Mammary epithelial cell (primary cell): ENCODE measurements at regions of chr12 and their contacts with region 1.

Region 1: DNA sequence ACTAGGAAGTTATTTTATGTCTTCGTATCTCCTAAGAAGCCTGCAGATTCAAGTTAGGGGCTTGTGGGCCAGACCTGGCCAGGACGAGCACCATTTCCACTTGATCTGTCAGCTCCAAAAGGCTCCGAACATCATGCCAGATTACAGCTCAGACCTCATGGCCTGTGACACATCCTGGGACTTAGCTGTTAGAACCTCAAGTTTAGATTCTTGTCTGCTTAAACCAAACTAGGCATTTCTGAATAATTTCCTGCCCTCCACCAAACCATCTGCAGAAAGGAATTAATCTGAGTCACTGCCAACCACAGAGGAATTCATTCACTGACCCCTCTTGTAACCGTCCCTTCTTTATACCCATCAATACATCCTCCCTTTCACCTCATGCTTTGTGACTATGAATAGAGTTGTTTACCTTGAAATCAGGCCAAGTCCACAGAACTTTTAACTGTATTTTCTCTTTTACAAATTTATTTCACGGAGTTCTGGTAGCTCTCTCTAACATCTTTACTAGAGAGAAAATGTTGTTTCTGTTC is 120.3 kb downstream of the FBXL14 start:
- DNase-seq: peak; percentile 93
- H3K4me3 ChIP-seq: peak overlapping the region in 2 of 3 experiments; percentile 17 to 28
- H3K27ac ChIP-seq: peak overlapping the region; percentile 92
- H3K4me1 ChIP-seq: peaks cover 29% of the 10 kb centered on the region
- H3K27me3 ChIP-seq: no peaks in the 10 kb centered on the region
- CTCF ChIP-seq: no peak

Region 2: DNA sequence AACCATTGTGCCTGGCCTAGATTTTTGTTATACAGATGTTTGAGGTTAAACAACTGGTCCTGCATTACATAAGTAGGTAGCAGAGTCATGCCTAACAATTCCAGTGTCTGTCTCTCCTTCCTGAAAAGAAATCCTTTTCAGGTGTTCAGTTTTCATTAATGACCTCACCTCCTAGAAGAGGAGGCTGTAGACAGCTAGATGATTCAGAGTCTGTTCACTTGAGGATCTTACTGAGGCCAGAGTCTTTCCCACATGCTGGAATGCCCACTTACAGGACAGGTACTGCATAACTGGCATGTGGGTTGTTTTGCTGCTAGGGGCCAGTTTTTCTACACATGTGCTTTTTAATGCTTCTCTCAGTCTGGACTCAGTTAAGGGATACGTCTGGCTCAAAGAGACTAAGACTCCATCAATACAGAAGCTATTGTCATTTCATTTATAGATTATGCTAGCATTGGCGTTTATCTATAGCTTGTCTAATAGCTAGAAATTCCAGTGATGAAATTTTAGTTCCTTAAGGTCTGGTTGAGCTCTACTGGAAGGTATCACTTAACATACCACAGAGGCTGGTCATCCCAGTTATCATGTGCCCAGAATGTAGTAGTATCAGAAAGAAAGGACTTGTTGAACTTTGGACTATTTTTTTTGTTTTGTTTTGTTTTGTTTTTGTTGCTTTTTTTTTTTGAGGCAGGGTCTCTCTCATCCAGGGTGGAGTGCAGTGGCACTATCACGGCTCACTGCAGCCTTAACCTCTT is 276.7 kb before region 1 on chr12:
- CTCF ChIA-PET with region 1: interaction called, 7 read pairs
- dilution Hi-C with region 1: no loop called
- in situ Hi-C with region 1: no loop called
- intact Hi-C with region 1: loop called (anchors 5 kb)
- DNase-seq: peak; percentile 96
- H3K4me3 ChIP-seq: no peak overlapping the region
- H3K27ac ChIP-seq: peak overlapping the region; percentile 82
- H3K4me1 ChIP-seq: peaks cover 27% of the 10 kb centered on the region
- H3K27me3 ChIP-seq: no peaks in the 10 kb centered on the region
- CTCF ChIP-seq: no peak

Region 3: GRCh38 chr12:1398673-1399072 is 75.4 kb before region 1 on chr12:
- CTCF ChIA-PET with region 1: no interaction called
- dilution Hi-C with region 1: no loop called
- in situ Hi-C with region 1: no loop called
- intact Hi-C with region 1: no loop called
- DNase-seq: no peak
- H3K4me3 ChIP-seq: no peak overlapping the region
- H3K27ac ChIP-seq: no peak overlapping the region
- H3K4me1 ChIP-seq: no peaks in the 10 kb centered on the region
- H3K27me3 ChIP-seq: no peaks in the 10 kb centered on the region
- CTCF ChIP-seq: peak in 1 of 2 donors; percentile 26

Region 4: DNA sequence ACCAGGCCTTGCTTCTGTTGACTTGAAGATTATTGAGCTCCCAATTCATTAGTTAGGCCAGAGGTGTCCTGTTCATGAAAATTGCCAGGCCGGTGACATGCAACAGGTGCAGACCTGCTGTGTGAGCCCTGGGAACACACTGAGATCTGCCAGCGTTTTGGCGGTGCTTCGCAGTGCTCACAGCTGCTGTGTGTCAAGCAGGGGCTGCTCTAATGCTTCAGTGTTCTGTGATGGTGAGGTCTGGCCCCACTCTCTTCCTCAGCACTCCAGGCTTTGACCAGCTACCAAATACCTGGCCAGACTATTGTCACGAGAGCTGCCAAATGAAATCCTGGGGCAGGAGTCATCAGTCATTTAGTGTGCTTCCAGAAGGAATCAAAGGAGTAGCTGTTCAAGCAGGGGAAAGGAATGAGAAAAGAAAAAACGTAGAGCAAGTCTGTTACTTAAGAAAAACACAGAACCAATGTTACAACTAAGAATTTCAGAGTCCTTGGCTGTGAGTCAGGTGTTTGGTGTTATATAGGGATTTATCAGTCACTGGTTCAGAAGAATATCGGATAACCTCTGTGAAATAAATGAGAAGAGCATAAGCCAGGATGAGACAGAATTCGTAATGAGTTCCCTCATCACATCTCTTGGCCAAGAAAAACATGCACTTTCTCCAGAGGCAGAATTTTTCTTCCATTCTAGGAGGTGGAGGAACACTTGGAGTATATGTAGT is 30.5 kb before region 1 on chr12:
- CTCF ChIA-PET with region 1: no interaction called
- dilution Hi-C with region 1: no loop called
- in situ Hi-C with region 1: no loop called
- intact Hi-C with region 1: loop called (anchors 1 kb)
- DNase-seq: peak; percentile 78
- H3K4me3 ChIP-seq: peak overlapping the region; percentile 16 to 31 (median 22)
- H3K27ac ChIP-seq: peak overlapping the region; percentile 55
- H3K4me1 ChIP-seq: peaks cover 23% of the 10 kb centered on the region
- H3K27me3 ChIP-seq: no peaks in the 10 kb centered on the region
- CTCF ChIP-seq: no peak

Region 5: DNA sequence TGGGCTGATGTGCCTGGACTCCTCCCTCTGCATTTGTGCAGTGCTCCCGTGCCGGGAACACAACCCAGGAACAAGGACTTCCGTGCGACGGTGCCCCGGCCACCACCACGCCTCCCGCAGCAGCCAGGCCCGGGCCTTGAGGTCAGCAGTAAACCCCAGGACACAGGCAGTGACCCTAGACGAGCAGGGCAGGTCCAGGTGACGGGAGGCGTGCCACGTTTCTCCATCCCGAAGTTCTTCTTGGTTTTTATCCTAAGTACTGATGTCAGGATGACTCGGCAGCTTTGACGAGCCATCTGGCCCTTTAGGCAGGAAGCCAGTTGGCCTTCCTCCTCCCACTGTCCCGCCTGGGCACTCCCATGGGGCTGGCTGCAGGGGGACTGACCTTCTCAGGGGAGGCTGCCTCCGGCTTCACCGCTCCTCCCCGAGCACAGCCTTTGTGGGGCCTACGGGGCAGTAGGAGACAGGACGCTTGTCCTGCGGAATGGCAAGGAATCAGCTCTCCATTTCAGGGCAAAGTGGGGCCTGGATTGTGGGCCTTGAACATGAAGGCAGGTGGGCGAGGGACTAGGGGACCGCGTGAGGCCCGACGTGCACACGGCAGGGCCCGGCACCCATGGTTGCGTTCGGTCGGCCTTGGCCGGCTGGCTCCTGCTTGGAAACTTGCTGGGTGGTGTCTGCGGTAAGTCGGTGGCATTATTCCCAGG is 26.1 kb after region 1 on chr12:
- CTCF ChIA-PET with region 1: no interaction called
- dilution Hi-C with region 1: no loop called
- in situ Hi-C with region 1: no loop called
- intact Hi-C with region 1: no loop called
- DNase-seq: no peak
- H3K4me3 ChIP-seq: no peak overlapping the region
- H3K27ac ChIP-seq: no peak overlapping the region
- H3K4me1 ChIP-seq: peaks cover 17% of the 10 kb centered on the region
- H3K27me3 ChIP-seq: no peaks in the 10 kb centered on the region
- CTCF ChIP-seq: no peak

Region 6: GRCh38 chr12:1533602-1534304 is 59.6 kb after region 1 on chr12:
- CTCF ChIA-PET with region 1: no interaction called
- dilution Hi-C with region 1: no loop called
- in situ Hi-C with region 1: no loop called
- intact Hi-C with region 1: loop called (anchors 5 kb)
- DNase-seq: peak; percentile 49
- H3K4me3 ChIP-seq: no peak overlapping the region
- H3K27ac ChIP-seq: no peak overlapping the region
- H3K4me1 ChIP-seq: peaks cover 7% of the 10 kb centered on the region
- H3K27me3 ChIP-seq: no peaks in the 10 kb centered on the region
- CTCF ChIP-seq: no peak